Astrocyte of the cerebellum (primary cell): ENCODE measurements at regions of chr4 and their contacts with region 1.

Region 1: GRCh38 chr4:86522349-86522748 is 71.8 kb upstream of the PTPN13 start:
- DNase-seq: no peak
- H3K4me3 ChIP-seq: no peak overlapping the region
- CTCF ChIP-seq: no peak

Region 2: DNA sequence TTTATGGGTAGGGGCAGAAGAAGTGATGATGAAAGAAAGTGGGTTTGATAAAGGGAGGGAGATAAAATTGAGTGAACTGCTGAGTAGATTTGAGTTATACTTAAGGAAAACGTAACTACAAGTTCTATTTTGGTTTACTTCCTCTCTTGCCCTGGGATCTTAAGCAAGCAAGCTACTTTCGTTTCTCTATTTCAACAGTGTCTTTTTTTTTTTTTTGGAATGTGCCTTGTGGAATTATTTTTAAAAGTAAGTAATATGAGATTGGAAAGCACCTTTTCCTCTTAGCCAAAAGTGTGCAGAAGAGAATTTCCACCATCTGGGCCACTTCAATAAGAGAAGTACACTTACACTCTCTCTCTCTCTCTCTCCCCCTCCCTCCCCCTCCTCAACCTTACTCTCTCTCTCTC is 385.9 kb after region 1 on chr4:
- in situ Hi-C with region 1: loop called (anchors 25 kb)
- DNase-seq: no peak
- H3K4me3 ChIP-seq: no peak overlapping the region
- CTCF ChIP-seq: no peak